Activated T-helper 2 cell treated with anti-CD3 and anti-CD28 coated beads, Interferon-gamma antibody, Interleukin-2, Interleukin-4, amounts not matched to agents 10 μg/mL and 5 μg/mL and 100 μg/mL, durations not matched to agents 14 hours and 24 hours and 36 hours (primary cell): ENCODE measurements at regions of chr17 and their contacts with region 1.

Region 1: DNA sequence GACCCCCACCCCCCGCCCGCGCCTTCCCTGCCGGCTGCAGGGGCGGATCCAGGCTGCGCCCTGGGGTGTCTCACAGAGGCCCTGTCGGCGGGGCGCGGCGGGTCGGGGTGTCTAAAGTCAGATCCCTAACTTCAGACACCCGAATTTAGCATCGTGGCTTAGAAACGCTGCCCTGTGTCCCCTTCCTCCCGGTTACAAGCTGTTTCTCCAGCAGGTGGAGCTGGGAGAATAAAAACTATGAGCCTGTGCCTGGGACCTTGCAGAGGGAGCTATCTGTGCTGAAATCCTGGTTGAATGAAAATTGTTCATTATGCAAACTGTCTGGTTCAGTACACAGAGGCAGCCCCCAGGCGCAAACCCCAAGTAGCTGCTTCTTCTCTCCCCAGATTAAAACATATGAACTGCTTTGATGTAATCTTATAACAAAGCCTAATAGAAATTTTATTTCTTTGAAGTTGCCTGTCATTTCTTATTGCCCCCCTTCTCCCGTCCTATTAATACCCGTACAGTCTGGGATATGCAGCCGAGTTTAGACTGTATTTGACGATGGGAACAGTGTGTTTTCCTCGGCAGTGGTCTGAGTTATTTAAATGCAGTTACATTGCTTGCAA is 79.0 kb downstream of the RPA1 start:
- DNase-seq: peak; percentile 18
- H3K4me3 Mint-ChIP-seq: no peak overlapping the region
- H3K27ac Mint-ChIP-seq: no peak overlapping the region
- H3K4me1 Mint-ChIP-seq: peaks cover 2% of the 10 kb centered on the region
- H3K27me3 Mint-ChIP-seq: peaks cover 58% of the 10 kb centered on the region

Region 2: GRCh38 chr17:1920948-1921351 is 12.1 kb after region 1 on chr17:
- intact Hi-C with region 1: no loop called
- DNase-seq: no peak
- H3K4me3 Mint-ChIP-seq: no peak overlapping the region
- H3K27ac Mint-ChIP-seq: no peak overlapping the region
- H3K4me1 Mint-ChIP-seq: no peaks in the 10 kb centered on the region
- H3K27me3 Mint-ChIP-seq: peaks cover 2% of the 10 kb centered on the region

Region 3: GRCh38 chr17:1931759-1932579 is 23.2 kb after region 1 on chr17:
- intact Hi-C with region 1: no loop called
- DNase-seq: no peak
- H3K4me3 Mint-ChIP-seq: no peak overlapping the region
- H3K27ac Mint-ChIP-seq: no peak overlapping the region
- H3K4me1 Mint-ChIP-seq: no peaks in the 10 kb centered on the region
- H3K27me3 Mint-ChIP-seq: peaks cover 5% of the 10 kb centered on the region

Region 4: GRCh38 chr17:1958134-1958881 is 49.5 kb after region 1 on chr17:
- intact Hi-C with region 1: no loop called
- DNase-seq: no peak
- H3K4me3 Mint-ChIP-seq: no peak overlapping the region
- H3K27ac Mint-ChIP-seq: no peak overlapping the region
- H3K4me1 Mint-ChIP-seq: no peaks in the 10 kb centered on the region
- H3K27me3 Mint-ChIP-seq: peaks cover 2% of the 10 kb centered on the region

Region 5: DNA sequence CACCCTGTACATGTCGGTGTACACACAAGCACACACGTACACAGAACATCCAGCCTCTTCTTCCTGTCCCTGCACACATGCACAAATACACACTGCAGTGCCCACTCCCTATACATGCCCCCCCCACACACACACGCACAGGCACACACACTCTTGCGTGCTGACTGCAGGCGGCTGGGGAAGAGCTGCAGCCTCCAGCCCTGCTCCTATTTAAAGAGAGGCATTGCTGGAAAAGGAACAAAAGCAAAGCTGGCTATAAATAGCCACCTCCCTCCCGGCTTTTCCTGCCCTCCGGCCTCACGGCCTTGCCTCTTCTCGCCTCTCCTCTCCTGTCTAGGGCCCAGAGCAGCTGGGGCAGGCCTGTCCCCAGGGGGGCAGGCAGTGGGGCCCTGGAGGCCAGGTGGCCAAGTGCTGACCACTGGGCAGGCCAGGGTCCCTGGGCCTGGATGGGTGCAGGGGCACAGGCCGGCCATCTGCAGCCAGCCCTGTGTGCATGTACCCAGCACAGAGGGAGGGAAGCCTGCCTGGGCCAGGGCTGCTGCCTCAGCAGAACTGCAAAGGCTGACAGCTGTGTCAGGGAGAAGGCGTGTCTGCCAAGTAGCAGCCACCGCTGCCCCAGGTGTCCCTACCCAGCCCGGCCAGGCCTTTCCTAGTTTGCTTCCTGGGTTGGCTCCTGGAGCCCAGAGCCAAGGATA is 90.9 kb after region 1 on chr17:
- intact Hi-C with region 1: loop called (anchors 10 kb)
- DNase-seq: no peak
- H3K4me3 Mint-ChIP-seq: peak overlapping the region; percentile 45
- H3K27ac Mint-ChIP-seq: no peak overlapping the region
- H3K4me1 Mint-ChIP-seq: no peaks in the 10 kb centered on the region
- H3K27me3 Mint-ChIP-seq: peaks cover 34% of the 10 kb centered on the region